Body of pancreas (tissue), 4 donors: ENCODE measurements at regions of chr2 and their contacts with region 1.

Region 1: GRCh38 chr2:46989491-46990230 is 74.1 kb upstream of the MCFD2 start:
- DNase-seq: no peak
- ATAC-seq: no peak
- H3K4me3 ChIP-seq: no peak overlapping the region
- H3K27ac ChIP-seq: peak overlapping the region in 3 of 4 donors; percentile 68 to 76 (median 71)
- H3K4me1 ChIP-seq: peaks cover 56% of the 10 kb centered on the region
- H3K27me3 ChIP-seq: no peaks in the 10 kb centered on the region
- CTCF ChIP-seq: no peak
- POLR2A ChIP-seq: no peak

Region 2: DNA sequence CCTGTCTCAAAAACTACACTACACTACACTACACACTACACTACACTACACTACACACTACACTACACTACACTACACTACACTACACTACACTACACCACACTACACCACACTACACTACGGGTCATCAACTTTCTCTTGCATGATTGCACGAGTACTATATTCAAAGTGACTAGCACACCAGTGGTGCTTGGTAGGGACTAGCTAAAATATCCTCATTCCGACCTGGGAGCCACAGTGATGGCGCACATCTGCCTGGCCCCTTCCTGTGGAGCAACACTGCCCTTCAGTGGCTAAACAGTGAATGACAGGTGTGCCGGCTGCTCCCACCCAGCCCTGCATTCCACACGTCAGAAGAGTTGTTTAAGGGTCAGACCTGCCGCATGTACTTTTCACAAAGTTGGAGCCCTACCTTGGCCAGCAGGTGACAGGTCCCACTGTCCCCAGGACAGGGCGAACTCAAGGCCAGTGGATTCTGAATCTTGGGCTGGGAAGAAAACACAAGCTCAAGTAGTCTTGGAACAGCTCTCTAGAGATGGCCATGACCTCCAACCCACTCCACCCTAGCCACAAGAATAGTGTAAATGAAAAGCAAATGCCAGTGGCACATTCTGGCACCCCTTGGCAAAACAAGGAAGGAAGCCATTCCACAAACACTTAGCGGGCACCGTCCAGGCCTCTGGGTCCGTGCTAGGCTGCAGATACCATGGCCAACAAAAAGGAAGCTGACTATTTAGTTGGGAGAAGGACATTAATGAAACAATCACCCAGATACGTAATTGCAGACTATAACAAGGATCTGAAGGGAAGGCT is 333.6 kb after region 1 on chr2:
- intact Hi-C with region 1: loop called (anchors 10 kb)
- DNase-seq: peak; percentile 77 to 80 (median 78)
- ATAC-seq: peak; percentile 95
- H3K4me3 ChIP-seq: no peak overlapping the region
- H3K27ac ChIP-seq: peak overlapping the region in 3 of 4 donors; percentile 0 to 61 (median 41)
- H3K4me1 ChIP-seq: peaks cover 8% of the 10 kb centered on the region
- H3K27me3 ChIP-seq: no peaks in the 10 kb centered on the region
- CTCF ChIP-seq: peak; percentile 91 to 99 (median 97)
- POLR2A ChIP-seq: peak in 1 of 3 donors; percentile 10